ENCODE measurements at regions of chr1 and their contacts with region 1.

Region 1: GRCh38 chr1:12658531-12659453 is 14.9 kb downstream of the AADACL4 start:
- DNase-seq: peak; percentile 83
- H3K4me3 Mint-ChIP-seq: peak overlapping the region; percentile 28
- H3K27ac Mint-ChIP-seq: no peak overlapping the region
- H3K4me1 Mint-ChIP-seq: peaks cover 4% of the 10 kb centered on the region
- H3K27me3 Mint-ChIP-seq: peaks cover 2% of the 10 kb centered on the region

Region 2: DNA sequence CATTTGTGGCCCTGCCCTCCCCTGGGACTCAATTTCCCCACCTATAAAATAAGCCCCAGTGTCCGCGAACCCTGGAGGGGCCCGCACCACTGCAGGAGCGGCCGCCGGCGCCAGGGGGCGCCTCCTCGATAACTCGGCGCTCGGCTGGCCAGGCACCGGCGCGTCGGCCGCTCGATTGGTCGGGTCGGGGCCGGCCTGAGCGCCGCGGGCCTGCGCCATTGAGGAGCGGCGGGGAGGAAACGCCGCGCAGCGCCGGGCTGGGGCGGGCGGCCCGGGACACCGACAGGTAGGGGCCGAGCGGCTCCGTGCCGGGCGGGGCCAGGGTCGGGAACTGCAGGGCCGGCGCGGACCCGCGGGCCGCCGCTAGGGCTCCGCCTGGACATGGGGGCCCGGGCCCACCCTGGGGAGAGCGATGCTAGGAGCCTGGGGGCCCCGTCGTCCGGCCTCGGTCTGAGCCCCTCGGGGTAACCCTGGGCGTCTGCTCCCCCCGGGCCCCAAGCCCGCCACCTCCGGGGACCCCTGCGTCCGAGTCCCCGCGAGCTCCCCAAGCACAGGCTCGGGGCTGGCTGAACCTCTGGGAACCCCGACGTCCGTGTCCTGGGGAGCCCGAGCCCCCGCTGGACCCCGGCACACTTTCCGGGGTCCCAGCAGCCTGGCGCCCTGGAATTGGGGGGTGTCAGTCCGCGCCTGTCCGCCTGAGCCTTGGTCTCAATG is 428.8 kb before region 1 on chr1 and contains the start of gene VPS13D:
- CTCF ChIA-PET with region 1: interaction called, 5 read pairs
- intact Hi-C with region 1: loop called (anchors 1 kb)
- DNase-seq: peak; percentile 86
- H3K4me3 Mint-ChIP-seq: peak within 1 kb of the TSS; percentile 80
- H3K27ac Mint-ChIP-seq: no peak within 1 kb of the TSS
- H3K4me1 Mint-ChIP-seq: peaks cover 21% of the 10 kb centered on the region
- H3K27me3 Mint-ChIP-seq: no peaks in the 10 kb centered on the region
- total RNA-seq, gene VPS13D: 20.0 to 23.3 TPM

Region 3: GRCh38 chr1:12275369-12275768 is 383.4 kb before region 1 on chr1:
- CTCF ChIA-PET with region 1: interaction called, 26 read pairs
- intact Hi-C with region 1: loop called (anchors 1 kb)
- DNase-seq: peak; percentile 70
- H3K4me3 Mint-ChIP-seq: no peak overlapping the region
- H3K27ac Mint-ChIP-seq: no peak overlapping the region
- H3K4me1 Mint-ChIP-seq: no peaks in the 10 kb centered on the region
- H3K27me3 Mint-ChIP-seq: no peaks in the 10 kb centered on the region

Region 4: GRCh38 chr1:12314333-12314903 is 344.4 kb before region 1 on chr1:
- CTCF ChIA-PET with region 1: interaction called, 29 read pairs
- intact Hi-C with region 1: loop called (anchors 1 kb)
- DNase-seq: no peak
- H3K4me3 Mint-ChIP-seq: no peak overlapping the region
- H3K27ac Mint-ChIP-seq: no peak overlapping the region
- H3K4me1 Mint-ChIP-seq: no peaks in the 10 kb centered on the region
- H3K27me3 Mint-ChIP-seq: no peaks in the 10 kb centered on the region

Region 5: GRCh38 chr1:12643079-12643478 is 15.7 kb before region 1 on chr1:
- CTCF ChIA-PET with region 1: interaction called, 13 read pairs
- intact Hi-C with region 1: no loop called
- DNase-seq: no peak
- H3K4me3 Mint-ChIP-seq: no peak overlapping the region
- H3K27ac Mint-ChIP-seq: no peak overlapping the region
- H3K4me1 Mint-ChIP-seq: no peaks in the 10 kb centered on the region
- H3K27me3 Mint-ChIP-seq: no peaks in the 10 kb centered on the region

Region 6: GRCh38 chr1:12669529-12670068 is 10.8 kb after region 1 on chr1:
- CTCF ChIA-PET with region 1: interaction called, 15 read pairs
- intact Hi-C with region 1: no loop called
- DNase-seq: no peak
- H3K4me3 Mint-ChIP-seq: no peak overlapping the region
- H3K27ac Mint-ChIP-seq: no peak overlapping the region
- H3K4me1 Mint-ChIP-seq: no peaks in the 10 kb centered on the region
- H3K27me3 Mint-ChIP-seq: peaks cover 8% of the 10 kb centered on the region

Measured in activated naive CD4-positive, alpha-beta T cell treated with anti-CD3 and anti-CD28 coated beads for 36 hours (primary cell).